ENCODE measurements at regions of chr12 and their contacts with region 1.

Region 1: DNA sequence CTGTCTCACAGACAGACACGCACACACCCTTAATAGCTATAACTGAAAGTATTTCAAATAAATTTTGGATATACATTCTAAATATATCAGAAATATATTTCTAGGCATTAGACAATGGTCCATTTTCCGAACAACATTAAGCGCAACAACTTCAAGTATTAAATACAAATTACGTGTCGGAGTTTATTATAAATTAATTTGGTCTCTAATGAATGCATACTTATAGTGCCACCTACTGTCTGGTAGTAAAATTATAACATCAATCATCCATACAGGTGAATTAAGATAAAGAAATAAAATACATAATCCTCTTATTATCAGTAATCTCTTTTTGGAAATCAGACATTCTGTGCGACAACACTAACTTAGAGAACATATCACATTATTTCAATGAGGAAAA is 27.2 kb upstream of the CMAS start:
- DNase-seq: peak; percentile 34
- H3K4me3 Mint-ChIP-seq: no peak overlapping the region
- H3K27ac Mint-ChIP-seq: no peak overlapping the region
- H3K4me1 Mint-ChIP-seq: no peaks in the 10 kb centered on the region
- H3K27me3 Mint-ChIP-seq: no peaks in the 10 kb centered on the region
- CTCF ChIP-seq: peak; percentile 43

Region 2: DNA sequence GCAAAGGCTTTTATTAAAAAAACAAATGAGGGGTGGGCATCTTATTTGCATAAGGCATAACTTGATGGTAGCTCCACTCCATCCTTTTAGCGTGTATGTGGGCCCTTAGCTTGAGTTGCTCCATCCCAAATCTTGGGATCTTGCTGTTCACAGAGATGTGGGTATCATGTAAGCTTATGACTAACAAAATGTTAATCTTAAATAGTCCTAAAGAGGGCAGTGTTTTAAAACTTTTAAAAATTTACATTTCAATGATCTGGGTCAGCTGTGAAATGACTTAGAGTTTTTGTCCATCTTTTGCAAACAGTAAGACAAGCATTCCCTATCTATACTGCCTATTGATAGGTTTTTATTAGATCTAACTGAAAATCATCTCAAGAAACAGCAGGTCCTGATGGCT is 770.2 kb before region 1 on chr12:
- CTCF ChIA-PET with region 1: interaction called, 3 read pairs
- POLR2A ChIA-PET with region 1: no interaction called
- intact Hi-C with region 1: loop called (anchors 10 kb)
- DNase-seq: peak; percentile 16
- H3K4me3 Mint-ChIP-seq: no peak overlapping the region
- H3K27ac Mint-ChIP-seq: no peak overlapping the region
- H3K4me1 Mint-ChIP-seq: no peaks in the 10 kb centered on the region
- H3K27me3 Mint-ChIP-seq: peaks cover 38% of the 10 kb centered on the region
- CTCF ChIP-seq: peak; percentile 25

Region 3: GRCh38 chr12:21451529-21451928 is 567.3 kb before region 1 on chr12:
- CTCF ChIA-PET with region 1: no interaction called
- POLR2A ChIA-PET with region 1: no interaction called
- intact Hi-C with region 1: no loop called
- DNase-seq: no peak
- H3K4me3 Mint-ChIP-seq: no peak overlapping the region
- H3K27ac Mint-ChIP-seq: no peak overlapping the region
- H3K4me1 Mint-ChIP-seq: no peaks in the 10 kb centered on the region
- H3K27me3 Mint-ChIP-seq: no peaks in the 10 kb centered on the region
- CTCF ChIP-seq: peak; percentile 7

Region 4: DNA sequence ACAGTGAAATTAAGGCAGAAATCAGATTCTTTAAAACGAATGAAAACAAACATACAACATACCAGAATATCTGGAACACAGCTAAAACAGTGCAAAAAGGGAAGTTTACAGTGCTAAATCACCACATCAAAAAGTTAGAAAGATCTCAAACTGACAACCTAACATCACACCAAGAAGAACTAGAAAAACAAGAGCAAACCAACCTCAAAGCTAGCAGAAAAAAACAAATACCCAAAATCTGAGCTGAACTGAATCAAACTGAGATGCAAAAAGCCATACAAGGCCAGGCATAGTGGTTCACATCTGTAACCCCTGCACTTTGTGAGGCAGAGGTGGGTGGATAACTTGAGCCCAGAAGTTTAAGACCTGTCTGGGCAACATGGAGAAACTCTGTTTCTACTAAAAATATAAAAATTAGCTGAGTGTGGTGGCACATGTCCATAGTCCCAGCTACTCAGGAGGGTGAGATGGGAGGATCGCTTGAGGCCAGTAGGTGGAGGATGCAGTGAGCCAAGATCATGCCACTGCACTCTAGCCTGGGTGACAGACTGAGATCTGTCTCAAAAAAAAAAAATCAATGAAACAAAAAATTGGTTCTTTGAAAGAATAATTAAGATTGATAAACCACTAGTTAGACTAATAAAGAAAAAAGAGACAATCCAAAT is 328.0 kb before region 1 on chr12:
- CTCF ChIA-PET with region 1: interaction called, 93 read pairs
- POLR2A ChIA-PET with region 1: no interaction called
- intact Hi-C with region 1: no loop called
- DNase-seq: no peak
- H3K4me3 Mint-ChIP-seq: no peak overlapping the region
- H3K27ac Mint-ChIP-seq: no peak overlapping the region
- H3K4me1 Mint-ChIP-seq: no peaks in the 10 kb centered on the region
- H3K27me3 Mint-ChIP-seq: no peaks in the 10 kb centered on the region
- CTCF ChIP-seq: no peak

Region 5: DNA sequence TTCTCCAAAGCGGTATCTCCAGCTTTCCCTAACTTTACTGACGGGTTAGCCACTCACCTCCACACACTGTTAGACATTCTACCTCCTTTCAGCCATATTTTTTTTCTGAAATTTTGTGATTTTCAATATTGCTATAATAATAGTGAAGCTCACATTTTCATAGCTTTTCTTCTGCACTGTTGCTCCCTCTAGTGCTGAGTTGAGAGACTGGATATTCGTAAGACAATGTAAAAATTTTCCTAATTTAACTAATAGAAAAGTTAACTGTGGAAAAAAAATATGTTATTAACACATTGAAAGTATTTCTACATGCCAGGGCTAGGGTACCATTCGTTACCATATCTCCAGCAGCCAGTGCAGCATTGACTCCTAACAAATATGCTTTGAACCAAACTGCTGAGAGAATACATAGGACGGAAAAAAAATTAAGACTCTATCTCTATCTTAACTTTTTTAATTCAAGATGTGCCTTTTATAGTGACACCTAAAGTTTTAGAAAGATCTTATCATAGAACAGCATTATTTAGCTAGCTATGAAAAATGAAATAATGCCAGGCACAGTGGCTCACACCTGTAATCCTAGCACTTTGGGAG is 28.9 kb before region 1 on chr12:
- CTCF ChIA-PET with region 1: interaction called, 32 read pairs
- POLR2A ChIA-PET with region 1: no interaction called
- intact Hi-C with region 1: no loop called
- DNase-seq: peak; percentile 39
- H3K4me3 Mint-ChIP-seq: no peak overlapping the region
- H3K27ac Mint-ChIP-seq: no peak overlapping the region
- H3K4me1 Mint-ChIP-seq: no peaks in the 10 kb centered on the region
- H3K27me3 Mint-ChIP-seq: peaks cover 25% of the 10 kb centered on the region
- CTCF ChIP-seq: peak; percentile 57

Region 6: DNA sequence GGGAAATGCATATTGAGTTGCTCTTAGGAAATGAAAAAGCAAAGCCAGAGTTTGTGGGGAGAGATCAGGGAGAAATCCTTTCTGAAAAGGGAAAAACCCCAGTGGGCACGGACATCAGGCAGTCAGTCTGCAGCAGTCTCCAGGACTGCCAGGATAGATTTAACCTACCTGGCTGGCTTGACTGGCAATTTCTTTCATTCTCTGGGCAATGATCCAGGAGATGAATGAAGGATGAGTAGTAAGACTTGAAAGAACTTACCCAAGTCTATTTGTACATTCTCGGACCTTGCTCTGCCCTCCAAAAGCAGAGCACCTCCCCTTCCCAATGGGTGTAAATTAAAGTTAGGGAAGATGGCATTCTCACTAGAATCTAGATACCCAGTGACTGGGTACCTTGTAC is 70.0 kb after region 1 on chr12:
- CTCF ChIA-PET with region 1: no interaction called
- POLR2A ChIA-PET with region 1: no interaction called
- intact Hi-C with region 1: no loop called
- DNase-seq: peak; percentile 65
- H3K4me3 Mint-ChIP-seq: no peak overlapping the region
- H3K27ac Mint-ChIP-seq: no peak overlapping the region
- H3K4me1 Mint-ChIP-seq: peaks cover 7% of the 10 kb centered on the region
- H3K27me3 Mint-ChIP-seq: no peaks in the 10 kb centered on the region
- CTCF ChIP-seq: no peak

Region 7: GRCh38 chr12:22543246-22544037 is 524.6 kb after region 1 on chr12:
- CTCF ChIA-PET with region 1: no interaction called
- POLR2A ChIA-PET with region 1: no interaction called
- intact Hi-C with region 1: no loop called
- DNase-seq: peak; percentile 35
- H3K4me3 Mint-ChIP-seq: peak overlapping the region; percentile 86
- H3K27ac Mint-ChIP-seq: peak overlapping the region; percentile 84
- H3K4me1 Mint-ChIP-seq: peaks cover 32% of the 10 kb centered on the region
- H3K27me3 Mint-ChIP-seq: no peaks in the 10 kb centered on the region
- CTCF ChIP-seq: no peak

Region 8: GRCh38 chr12:22729957-22730443 is 711.1 kb after region 1 on chr12:
- CTCF ChIA-PET with region 1: no interaction called
- POLR2A ChIA-PET with region 1: no interaction called
- intact Hi-C with region 1: no loop called
- DNase-seq: peak; percentile 31
- H3K4me3 Mint-ChIP-seq: no peak overlapping the region
- H3K27ac Mint-ChIP-seq: no peak overlapping the region
- H3K4me1 Mint-ChIP-seq: no peaks in the 10 kb centered on the region
- H3K27me3 Mint-ChIP-seq: peaks cover 8% of the 10 kb centered on the region
- CTCF ChIP-seq: no peak

Measured in MCF 10A (cell line).